Activated CD8-positive, alpha-beta T cell treated with anti-CD3 and anti-CD28 coated beads for 36 hours (primary cell): ENCODE measurements at regions of chr3 and their contacts with region 1.

Region 1: GRCh38 chr3:112734718-112735350 is 93.9 kb upstream of the CCDC80 start:
- DNase-seq: peak; percentile 85
- ATAC-seq: peak; percentile 70
- H3K4me3 Mint-ChIP-seq: no peak overlapping the region
- H3K27ac Mint-ChIP-seq: no peak overlapping the region
- H3K4me1 Mint-ChIP-seq: peaks cover 36% of the 10 kb centered on the region
- H3K27me3 Mint-ChIP-seq: no peaks in the 10 kb centered on the region
- CTCF ChIP-seq: peak; percentile 79

Region 2: GRCh38 chr3:112635671-112636070 is 99.2 kb before region 1 on chr3:
- CTCF ChIA-PET with region 1: interaction called, 16 read pairs
- POLR2A ChIA-PET with region 1: interaction called, 3 read pairs
- intact Hi-C with region 1: loop called (anchors 5 kb)
- DNase-seq: no peak
- ATAC-seq: no peak
- H3K4me3 Mint-ChIP-seq: no peak overlapping the region
- H3K27ac Mint-ChIP-seq: no peak overlapping the region
- H3K4me1 Mint-ChIP-seq: peaks cover 8% of the 10 kb centered on the region
- H3K27me3 Mint-ChIP-seq: peaks cover 2% of the 10 kb centered on the region
- CTCF ChIP-seq: no peak

Region 3: GRCh38 chr3:112681822-112682325 is 53.0 kb before region 1 on chr3:
- CTCF ChIA-PET with region 1: interaction called, 15 read pairs
- POLR2A ChIA-PET with region 1: no interaction called
- intact Hi-C with region 1: no loop called
- DNase-seq: no peak
- ATAC-seq: no peak
- H3K4me3 Mint-ChIP-seq: no peak overlapping the region
- H3K27ac Mint-ChIP-seq: no peak overlapping the region
- H3K4me1 Mint-ChIP-seq: peaks cover 13% of the 10 kb centered on the region
- H3K27me3 Mint-ChIP-seq: peaks cover 5% of the 10 kb centered on the region
- CTCF ChIP-seq: no peak

Region 4: GRCh38 chr3:112761062-112761638 is 26.3 kb after region 1 on chr3:
- CTCF ChIA-PET with region 1: interaction called, 20 read pairs
- POLR2A ChIA-PET with region 1: no interaction called
- intact Hi-C with region 1: no loop called
- DNase-seq: no peak
- ATAC-seq: no peak
- H3K4me3 Mint-ChIP-seq: no peak overlapping the region
- H3K27ac Mint-ChIP-seq: no peak overlapping the region
- H3K4me1 Mint-ChIP-seq: peaks cover 3% of the 10 kb centered on the region
- H3K27me3 Mint-ChIP-seq: no peaks in the 10 kb centered on the region
- CTCF ChIP-seq: no peak

Region 5: DNA sequence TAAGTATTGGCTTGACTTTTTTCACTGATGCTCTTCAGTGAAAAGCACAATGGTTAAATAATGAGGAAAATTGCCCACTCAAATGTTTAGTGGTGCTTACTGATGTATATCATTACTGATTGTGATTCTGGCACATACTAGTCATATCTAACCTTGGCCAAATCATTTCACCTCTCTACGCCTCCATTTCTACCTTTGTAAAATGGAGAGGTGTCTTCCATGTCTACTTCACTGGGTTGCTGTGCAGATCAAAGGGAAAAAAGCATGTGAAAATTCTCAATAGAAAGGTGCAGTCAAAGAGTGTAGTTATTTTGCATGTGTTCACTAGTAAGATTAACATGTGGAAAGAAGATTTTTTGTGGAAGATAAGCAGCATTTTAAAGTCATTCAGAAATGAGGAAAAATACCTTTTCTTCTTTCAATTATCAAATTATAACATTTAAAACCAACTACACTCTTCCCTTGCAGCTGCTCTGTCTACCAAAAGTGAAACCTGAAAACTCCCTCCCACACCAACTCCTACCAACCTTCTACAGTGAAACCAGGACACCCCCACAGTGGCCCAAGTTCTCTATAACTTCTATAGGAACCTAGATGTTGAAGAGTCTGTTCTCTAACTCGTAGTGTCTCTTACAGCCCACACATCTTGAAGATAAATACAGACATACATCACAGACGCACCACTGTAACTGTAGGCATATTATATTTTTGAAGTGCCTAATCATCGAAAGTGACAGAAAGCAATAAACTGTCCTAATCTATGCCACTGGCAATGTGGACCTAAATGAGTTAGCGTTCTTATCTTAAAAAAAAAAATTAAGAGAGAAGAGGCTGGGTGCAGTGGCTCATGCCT is 238.7 kb after region 1 on chr3:
- CTCF ChIA-PET with region 1: interaction called, 85 read pairs
- POLR2A ChIA-PET with region 1: interaction called, 5 read pairs
- intact Hi-C with region 1: loop called (anchors 2 kb)
- DNase-seq: peak; percentile 77
- ATAC-seq: peak; percentile 81
- H3K4me3 Mint-ChIP-seq: peak overlapping the region; percentile 73
- H3K27ac Mint-ChIP-seq: peak overlapping the region; percentile 82
- H3K4me1 Mint-ChIP-seq: peaks cover 85% of the 10 kb centered on the region
- H3K27me3 Mint-ChIP-seq: no peaks in the 10 kb centered on the region
- CTCF ChIP-seq: no peak

Region 6: DNA sequence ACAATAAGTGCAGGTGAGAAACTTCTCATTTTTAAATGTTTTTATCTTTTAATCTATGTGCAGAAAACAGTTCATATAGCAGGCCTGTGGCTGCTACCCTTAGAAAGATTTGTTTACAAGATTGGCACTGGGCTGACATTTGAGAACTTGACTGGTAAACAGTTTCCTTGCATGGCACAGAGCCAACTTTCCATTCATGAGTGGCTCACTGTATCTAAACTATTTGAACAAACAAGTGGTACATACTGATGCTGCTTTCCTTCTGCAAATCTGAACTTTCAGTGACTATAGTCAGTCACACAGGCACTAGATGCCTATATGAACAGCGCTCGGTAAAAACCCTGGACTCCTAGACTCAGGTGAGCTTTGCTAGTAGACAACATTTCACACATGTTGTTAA is 249.7 kb after region 1 on chr3:
- CTCF ChIA-PET with region 1: interaction called, 85 read pairs
- POLR2A ChIA-PET with region 1: interaction called, 5 read pairs
- intact Hi-C with region 1: no loop called
- DNase-seq: peak; percentile 27
- ATAC-seq: peak; percentile 51
- H3K4me3 Mint-ChIP-seq: no peak overlapping the region
- H3K27ac Mint-ChIP-seq: no peak overlapping the region
- H3K4me1 Mint-ChIP-seq: peaks cover 38% of the 10 kb centered on the region
- H3K27me3 Mint-ChIP-seq: no peaks in the 10 kb centered on the region
- CTCF ChIP-seq: no peak